Endothelial cell of umbilical vein (primary cell): ENCODE measurements at regions of chr3 and their contacts with region 1.

Region 1: GRCh38 chr3:69739204-69740102 is at the start of gene MITF:
- DNase-seq: peak; percentile 94
- H3K4me3 ChIP-seq: peak within 1 kb of the TSS; percentile 63 to 87 (median 74)
- H3K27ac ChIP-seq: no peak within 1 kb of the TSS
- H3K4me1 ChIP-seq: peaks cover 16% of the 10 kb centered on the region
- H3K27me3 ChIP-seq: peaks cover 0 to 6% of the 10 kb centered on the region in 2 experiments
- CTCF ChIP-seq: no peak
- POLR2A ChIP-seq: peak; percentile 30
- total RNA-seq, gene MITF: 2.5 and 3.9 TPM in 2 replicates

Region 2: GRCh38 chr3:69691860-69692259 is 47.6 kb before region 1 on chr3:
- CTCF ChIA-PET with region 1: interaction called, 20 read pairs
- POLR2A ChIA-PET with region 1: no interaction called
- dilution Hi-C with region 1: no loop called
- intact Hi-C with region 1: loop called (anchors 2 kb)
- DNase-seq: no peak
- H3K4me3 ChIP-seq: no peak overlapping the region
- H3K27ac ChIP-seq: no peak overlapping the region
- H3K4me1 ChIP-seq: no peaks in the 10 kb centered on the region
- H3K27me3 ChIP-seq: peaks cover 6 to 10% of the 10 kb centered on the region in 2 experiments
- CTCF ChIP-seq: no peak
- POLR2A ChIP-seq: no peak

Region 3: GRCh38 chr3:69764121-69764741 is 24.8 kb after region 1 on chr3:
- CTCF ChIA-PET with region 1: interaction called, 12 read pairs
- POLR2A ChIA-PET with region 1: no interaction called
- dilution Hi-C with region 1: no loop called
- intact Hi-C with region 1: no loop called
- DNase-seq: no peak
- H3K4me3 ChIP-seq: peak overlapping the region in 1 of 3 experiments; percentile 30
- H3K27ac ChIP-seq: no peak overlapping the region
- H3K4me1 ChIP-seq: peaks cover 25% of the 10 kb centered on the region
- H3K27me3 ChIP-seq: no peaks in the 10 kb centered on the region
- CTCF ChIP-seq: no peak
- POLR2A ChIP-seq: no peak

Region 4: GRCh38 chr3:69770219-69770618 is 30.8 kb after region 1 on chr3:
- CTCF ChIA-PET with region 1: interaction called, 3 read pairs
- POLR2A ChIA-PET with region 1: interaction called, 3 read pairs
- dilution Hi-C with region 1: no loop called
- intact Hi-C with region 1: loop called (anchors 2 kb)
- DNase-seq: peak; percentile 77
- H3K4me3 ChIP-seq: no peak overlapping the region
- H3K27ac ChIP-seq: peak overlapping the region; percentile 66
- H3K4me1 ChIP-seq: peaks cover 22% of the 10 kb centered on the region
- H3K27me3 ChIP-seq: no peaks in the 10 kb centered on the region
- CTCF ChIP-seq: no peak
- POLR2A ChIP-seq: no peak

Region 5: DNA sequence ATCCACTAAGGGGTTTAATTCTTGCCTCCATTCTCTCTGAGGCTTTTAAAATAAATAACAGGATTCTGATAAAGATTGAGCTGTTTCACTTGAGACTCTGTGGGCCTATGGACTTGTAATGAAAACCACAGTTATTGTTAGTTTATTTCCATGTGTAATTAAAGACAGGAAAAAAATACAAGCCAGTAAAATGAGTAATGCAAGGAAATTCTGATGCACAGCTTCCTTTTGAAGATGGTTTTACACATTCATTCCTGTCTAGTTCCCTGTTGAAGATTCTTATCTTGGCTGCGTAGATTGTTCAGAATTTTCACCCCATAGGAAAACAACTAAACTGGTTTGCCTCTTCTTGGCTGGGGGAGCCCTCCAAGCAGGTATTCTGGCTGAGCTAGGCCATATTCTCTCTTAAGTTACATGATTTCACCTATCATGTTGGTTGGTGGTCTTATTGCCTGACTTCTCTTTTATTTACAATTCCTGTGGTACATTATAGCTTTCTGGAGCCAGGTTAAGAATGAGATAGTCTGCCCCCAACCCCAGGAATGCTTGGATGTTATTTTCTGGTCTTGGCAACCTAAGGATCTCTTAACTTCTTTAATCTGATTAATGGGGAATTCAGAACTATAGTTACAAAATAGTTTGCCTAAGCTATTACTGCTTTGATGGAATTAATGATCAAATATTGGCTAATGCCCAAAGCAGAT is 67.4 kb after region 1 on chr3:
- CTCF ChIA-PET with region 1: interaction called, 3 read pairs
- POLR2A ChIA-PET with region 1: no interaction called
- dilution Hi-C with region 1: no loop called
- intact Hi-C with region 1: loop called (anchors 1 kb)
- DNase-seq: peak; percentile 91
- H3K4me3 ChIP-seq: no peak overlapping the region
- H3K27ac ChIP-seq: peak overlapping the region; percentile 91
- H3K4me1 ChIP-seq: peaks cover 38% of the 10 kb centered on the region
- H3K27me3 ChIP-seq: no peaks in the 10 kb centered on the region
- CTCF ChIP-seq: no peak
- POLR2A ChIP-seq: no peak